ENCODE measurements at regions of chr2 and their contacts with region 1.

Region 1: DNA sequence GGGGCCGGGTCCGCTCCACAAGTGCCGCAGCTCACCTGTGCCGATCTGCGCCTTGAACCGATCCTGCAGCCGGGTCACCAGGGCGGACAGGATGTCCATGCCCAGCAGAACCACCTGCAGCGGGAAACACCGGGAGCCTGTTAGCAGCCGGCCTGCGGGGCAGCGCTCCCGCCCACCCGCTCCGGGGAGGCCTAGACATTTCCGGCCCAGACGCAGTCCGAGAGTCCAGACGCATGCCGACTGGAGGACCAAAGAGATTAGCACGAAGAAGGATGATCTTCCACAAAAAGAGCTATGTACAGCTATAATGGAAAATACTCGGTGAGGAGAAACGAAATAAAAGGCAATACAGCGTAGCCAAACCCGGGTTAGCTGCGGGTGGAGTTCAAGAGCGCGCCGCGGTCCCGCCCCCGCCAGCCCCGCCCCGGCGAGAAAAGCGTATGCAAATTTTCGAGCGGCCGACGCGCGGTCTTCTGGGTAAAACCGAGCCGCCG is 421 bp upstream of the RNU4ATAC start:
- DNase-seq: peak; percentile 75
- H3K4me3 Mint-ChIP-seq: peak overlapping the region; percentile 81
- H3K27ac Mint-ChIP-seq: peak overlapping the region; percentile 89
- H3K4me1 Mint-ChIP-seq: peaks cover 34% of the 10 kb centered on the region
- H3K27me3 Mint-ChIP-seq: no peaks in the 10 kb centered on the region
- CTCF ChIP-seq: no peak

Region 2: DNA sequence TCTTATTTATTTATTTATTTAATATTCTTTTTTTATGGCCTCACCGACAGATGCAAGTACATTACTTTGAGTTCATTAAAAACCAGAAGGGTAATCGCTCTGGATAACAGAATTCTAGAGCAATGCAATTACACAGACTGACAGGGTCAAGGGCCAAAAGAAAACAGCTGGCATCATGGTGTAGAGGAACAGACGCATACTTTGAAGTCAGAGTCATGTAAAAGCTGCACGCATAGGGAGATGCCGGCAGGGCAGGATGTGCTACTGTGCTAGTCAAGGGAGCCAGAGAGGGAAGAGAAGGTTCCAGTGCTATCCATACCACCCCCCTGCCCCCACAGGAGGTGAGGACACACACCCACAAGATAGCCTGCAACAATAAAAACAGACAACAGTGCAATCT is 130.1 kb before region 1 on chr2:
- CTCF ChIA-PET with region 1: no interaction called
- intact Hi-C with region 1: loop called (anchors 1 kb)
- DNase-seq: no peak
- H3K4me3 Mint-ChIP-seq: no peak overlapping the region
- H3K27ac Mint-ChIP-seq: no peak overlapping the region
- H3K4me1 Mint-ChIP-seq: no peaks in the 10 kb centered on the region
- H3K27me3 Mint-ChIP-seq: no peaks in the 10 kb centered on the region
- CTCF ChIP-seq: no peak

Region 3: DNA sequence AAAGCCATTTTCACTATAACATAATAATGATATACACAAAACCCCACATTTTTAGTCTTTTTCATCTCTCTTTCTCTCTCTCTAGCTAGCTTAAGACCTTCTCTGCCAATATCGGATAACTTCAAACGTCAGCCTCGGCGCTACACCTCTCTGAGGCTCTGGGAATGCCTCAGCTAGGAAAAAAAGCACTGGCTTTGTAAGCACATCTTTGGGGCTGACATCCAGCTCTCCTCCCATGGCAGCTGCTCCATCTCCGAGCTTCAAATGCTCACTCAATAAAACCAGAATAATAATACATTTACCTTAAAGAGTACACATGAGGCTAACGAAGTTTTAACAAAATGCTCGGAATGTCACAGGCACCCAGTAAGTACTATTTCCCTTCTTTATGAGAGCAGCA is 11.2 kb after region 1 on chr2:
- CTCF ChIA-PET with region 1: no interaction called
- intact Hi-C with region 1: no loop called
- DNase-seq: no peak
- H3K4me3 Mint-ChIP-seq: no peak overlapping the region
- H3K27ac Mint-ChIP-seq: no peak overlapping the region
- H3K4me1 Mint-ChIP-seq: peaks cover 8% of the 10 kb centered on the region
- H3K27me3 Mint-ChIP-seq: no peaks in the 10 kb centered on the region
- CTCF ChIP-seq: no peak

Region 4: DNA sequence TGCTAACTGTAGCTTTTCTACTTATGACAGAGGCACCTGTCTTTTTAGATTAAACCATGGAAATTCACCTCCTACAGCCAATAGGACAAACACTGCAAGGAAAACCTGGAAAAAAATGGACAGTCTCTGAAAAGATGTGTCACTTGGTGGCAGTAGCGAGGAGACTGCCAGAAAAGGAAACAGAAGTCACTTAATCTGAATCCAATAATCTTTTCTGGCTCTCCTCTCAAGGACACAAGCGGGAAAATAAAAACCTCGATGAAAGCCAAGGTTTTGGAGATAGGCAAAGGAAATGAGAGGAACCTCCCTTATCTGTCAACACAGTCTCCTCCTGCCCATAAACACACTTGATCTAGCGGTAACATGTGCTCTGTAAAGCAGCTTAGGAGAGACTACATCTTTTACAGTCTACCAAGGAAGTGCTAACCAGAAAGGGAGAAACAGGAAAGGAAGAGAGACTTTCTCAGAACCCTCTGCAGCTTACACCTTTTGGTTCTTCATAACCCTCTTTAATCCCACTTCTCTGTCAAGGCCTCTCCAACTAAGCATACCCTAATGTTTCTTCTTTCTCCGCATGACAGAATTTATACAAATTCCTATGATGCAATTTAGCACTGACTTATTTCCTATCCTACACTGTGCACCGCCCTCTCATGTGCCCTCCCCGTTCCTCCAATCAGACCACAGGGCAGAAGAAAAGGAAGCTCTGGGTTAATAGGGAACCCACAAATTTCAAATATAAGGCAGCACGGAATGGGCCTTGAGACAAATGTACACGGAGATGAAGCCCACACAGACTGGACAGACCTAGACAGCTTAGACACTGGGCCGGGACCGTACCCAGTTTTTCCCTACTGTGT is 66.2 kb after region 1 on chr2:
- CTCF ChIA-PET with region 1: interaction called, 3 read pairs
- intact Hi-C with region 1: loop called (anchors 5 kb)
- DNase-seq: peak; percentile 40
- H3K4me3 Mint-ChIP-seq: peak overlapping the region; percentile 63
- H3K27ac Mint-ChIP-seq: peak overlapping the region; percentile 60
- H3K4me1 Mint-ChIP-seq: peaks cover 40% of the 10 kb centered on the region
- H3K27me3 Mint-ChIP-seq: no peaks in the 10 kb centered on the region
- CTCF ChIP-seq: peak; percentile 65

Region 5: GRCh38 chr2:121699421-121700333 is 169.4 kb after region 1 on chr2:
- CTCF ChIA-PET with region 1: interaction called, 10 read pairs
- intact Hi-C with region 1: no loop called
- DNase-seq: peak; percentile 88
- H3K4me3 Mint-ChIP-seq: peak overlapping the region; percentile 65
- H3K27ac Mint-ChIP-seq: peak overlapping the region; percentile 90
- H3K4me1 Mint-ChIP-seq: peaks cover 66% of the 10 kb centered on the region
- H3K27me3 Mint-ChIP-seq: no peaks in the 10 kb centered on the region
- CTCF ChIP-seq: no peak

Region 6: GRCh38 chr2:121736462-121737341 is 206.4 kb after region 1 on chr2 and contains the start of gene NIFK:
- CTCF ChIA-PET with region 1: interaction called, 11 read pairs
- intact Hi-C with region 1: no loop called
- DNase-seq: peak; percentile 99
- H3K4me3 Mint-ChIP-seq: peak within 1 kb of the TSS; percentile 99
- H3K27ac Mint-ChIP-seq: peak within 1 kb of the TSS; percentile 96
- H3K4me1 Mint-ChIP-seq: peaks cover 10% of the 10 kb centered on the region
- H3K27me3 Mint-ChIP-seq: peaks cover 12% of the 10 kb centered on the region
- CTCF ChIP-seq: no peak
- total RNA-seq, gene NIFK: 82.9 and 95.2 TPM in 2 replicates